K562 (cell line): ENCODE measurements at regions of chr3 and their contacts with region 1.

Region 1: DNA sequence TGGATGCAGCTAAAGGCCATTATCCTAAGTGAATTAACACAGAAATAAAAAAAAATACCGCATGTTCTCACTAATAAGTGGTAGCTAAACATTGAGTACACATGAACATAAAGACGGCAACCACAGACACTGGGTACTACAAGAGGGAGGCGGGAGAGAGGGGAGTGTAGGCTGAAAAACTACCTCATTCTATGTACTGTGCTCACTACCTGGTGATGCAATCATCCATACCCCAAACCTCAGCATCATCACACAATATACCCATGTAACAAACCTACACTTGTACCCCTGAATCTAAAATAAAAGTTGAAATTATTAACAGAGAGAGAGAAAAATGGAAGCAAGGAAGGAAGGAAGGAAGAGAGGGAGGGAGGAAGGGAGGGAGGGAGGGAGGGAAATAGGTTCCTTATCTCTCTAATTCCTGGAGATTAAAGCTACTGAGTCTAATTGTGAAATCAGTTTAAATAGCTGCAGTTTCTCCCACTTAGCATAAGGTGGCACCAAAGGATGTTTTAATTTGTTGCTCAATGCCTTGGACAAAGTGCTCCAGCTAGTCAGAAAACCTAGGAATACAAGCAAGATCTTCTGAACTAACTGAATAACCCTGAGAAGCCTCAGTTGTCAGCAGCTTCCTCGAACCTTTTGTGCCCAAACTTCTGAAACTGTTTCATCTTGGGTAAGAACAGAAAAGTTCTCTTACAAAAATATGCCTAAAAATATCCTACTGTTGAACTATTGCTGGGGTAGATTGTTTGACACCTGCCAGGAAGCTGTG is 79.4 kb upstream of the ATP11B start:
- DNase-seq: peak in 2 of 4 experiments; percentile 62 to 81
- ATAC-seq: peak; percentile 68
- H3K4me3 ChIP-seq: no peak overlapping the region
- H3K27ac ChIP-seq: peak overlapping the region; percentile 47; the same call in 1 of the 3 replicates
- H3K4me1 ChIP-seq: peaks cover 3 to 35% of the 10 kb centered on the region in 2 experiments
- H3K27me3 ChIP-seq: no peaks in the 10 kb centered on the region
- CTCF ChIP-seq: peak; percentile 61 to 88 (median 63); a peak in 5 of 6 replicates
- EP300 ChIP-seq: 0 out of 2 replicates have a peak, but pooled peaks have one; percentile 1
- POLR2A ChIP-seq: no peak
- RAD21 ChIP-seq: peak; percentile 88 to 91

Region 2: DNA sequence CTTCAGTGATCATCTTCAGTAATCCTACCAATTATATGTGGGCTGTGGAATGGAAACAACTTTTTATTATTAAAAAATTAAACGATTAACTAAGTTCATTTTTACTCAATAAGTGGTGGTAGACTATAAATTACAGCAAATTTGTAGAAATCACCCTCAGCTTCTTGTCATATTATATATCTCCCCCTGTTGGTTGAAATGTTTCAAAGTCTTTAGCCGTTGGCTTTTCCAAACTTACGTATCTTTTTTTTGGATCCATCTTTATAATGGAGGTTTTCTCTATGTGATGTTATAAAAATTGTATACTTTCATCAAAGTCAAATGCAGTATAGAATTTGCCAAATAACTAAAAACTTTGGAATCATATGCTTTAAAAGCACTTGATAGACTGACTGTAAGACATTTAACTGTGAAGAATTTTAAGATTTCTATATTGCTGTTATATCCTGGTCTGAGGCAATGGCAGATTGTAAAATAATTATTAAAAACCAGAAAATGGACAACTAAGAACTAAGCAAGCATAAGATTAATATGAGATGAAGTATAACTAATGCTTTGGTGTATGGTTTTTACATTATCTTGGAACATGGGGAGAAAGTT is 124.0 kb after region 1 on chr3:
- CTCF ChIA-PET with region 1: interaction called, 20 read pairs
- POLR2A ChIA-PET with region 1: interaction called, 4 read pairs
- in situ Hi-C with region 1: loop called (anchors 5 kb)
- intact Hi-C with region 1: loop called (anchors 1 kb)
- DNase-seq: peak in 1 of 4 experiments; percentile 39
- ATAC-seq: peak; percentile 68
- H3K4me3 ChIP-seq: no peak overlapping the region
- H3K27ac ChIP-seq: no peak overlapping the region
- H3K4me1 ChIP-seq: no peaks in the 10 kb centered on the region
- H3K27me3 ChIP-seq: no peaks in the 10 kb centered on the region
- CTCF ChIP-seq: peak in 2 of 3 experiments; percentile 11 to 67; a peak in 3 of 6 replicates
- EP300 ChIP-seq: no peak
- POLR2A ChIP-seq: no peak
- RAD21 ChIP-seq: peak; percentile 63 to 80

Region 3: DNA sequence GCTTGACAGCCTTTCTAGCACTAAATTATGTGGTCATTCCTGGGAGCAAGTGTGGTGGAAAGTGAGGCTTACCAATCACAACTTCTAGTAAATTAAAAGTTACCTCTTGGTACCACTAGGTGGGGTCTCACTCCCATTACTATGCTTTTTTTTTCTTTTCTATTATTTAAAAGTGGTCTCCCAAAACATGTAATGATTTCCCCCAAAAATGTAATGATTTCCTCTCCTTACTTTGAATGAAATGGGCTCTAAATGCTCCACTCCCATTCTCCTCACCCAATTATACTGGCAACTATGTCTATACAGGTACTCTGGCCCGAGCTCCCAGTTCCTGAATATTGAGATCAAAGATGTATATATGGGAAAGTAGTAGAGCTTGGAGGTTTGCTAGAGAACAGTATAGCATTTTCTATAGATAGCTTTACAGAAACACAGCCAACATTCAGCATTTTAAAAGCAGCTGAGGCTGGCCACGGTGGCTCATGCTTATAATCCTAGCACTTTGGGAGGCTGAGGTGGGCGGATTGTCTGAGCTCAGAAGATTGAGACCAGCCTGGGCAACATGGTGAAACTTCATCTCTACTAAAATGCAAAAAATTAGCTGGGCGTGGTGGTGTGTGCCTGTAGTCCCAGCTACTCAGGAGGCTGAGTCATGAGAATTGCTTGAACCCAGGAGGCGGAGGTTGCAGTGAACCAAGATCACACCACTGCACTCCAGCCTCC is 195.5 kb after region 1 on chr3:
- CTCF ChIA-PET with region 1: no interaction called
- POLR2A ChIA-PET with region 1: no interaction called
- in situ Hi-C with region 1: no loop called
- intact Hi-C with region 1: loop called (anchors 5 kb)
- DNase-seq: peak; percentile 33 to 45 (median 36)
- ATAC-seq: peak; percentile 54
- H3K4me3 ChIP-seq: no peak overlapping the region
- H3K27ac ChIP-seq: no peak overlapping the region
- H3K4me1 ChIP-seq: peaks cover 7 to 23% of the 10 kb centered on the region in 2 experiments
- H3K27me3 ChIP-seq: no peaks in the 10 kb centered on the region
- CTCF ChIP-seq: peak; percentile 18 to 65 (median 55); a peak in 5 of 6 replicates
- EP300 ChIP-seq: no peak
- POLR2A ChIP-seq: no peak
- RAD21 ChIP-seq: peak; percentile 35 to 63

Region 4: GRCh38 chr3:183178629-183179549 is 465.0 kb after region 1 on chr3:
- CTCF ChIA-PET with region 1: interaction called, 4 read pairs
- POLR2A ChIA-PET with region 1: no interaction called
- in situ Hi-C with region 1: no loop called
- intact Hi-C with region 1: loop called (anchors 1 kb)
- DNase-seq: peak; percentile 65 to 69 (median 68)
- ATAC-seq: peak; percentile 92
- H3K4me3 ChIP-seq: peak overlapping the region; percentile 50
- H3K27ac ChIP-seq: no peak overlapping the region
- H3K4me1 ChIP-seq: peaks cover 0 to 25% of the 10 kb centered on the region in 2 experiments; a peak in 2 of 5 replicates
- H3K27me3 ChIP-seq: peaks cover 0 to 29% of the 10 kb centered on the region in 2 experiments; a peak in 3 of 5 replicates
- CTCF ChIP-seq: peak; percentile 55 to 90 (median 62); a peak in 5 of 6 replicates
- EP300 ChIP-seq: no peak
- POLR2A ChIP-seq: no peak
- RAD21 ChIP-seq: peak; percentile 47 to 58

Region 5: DNA sequence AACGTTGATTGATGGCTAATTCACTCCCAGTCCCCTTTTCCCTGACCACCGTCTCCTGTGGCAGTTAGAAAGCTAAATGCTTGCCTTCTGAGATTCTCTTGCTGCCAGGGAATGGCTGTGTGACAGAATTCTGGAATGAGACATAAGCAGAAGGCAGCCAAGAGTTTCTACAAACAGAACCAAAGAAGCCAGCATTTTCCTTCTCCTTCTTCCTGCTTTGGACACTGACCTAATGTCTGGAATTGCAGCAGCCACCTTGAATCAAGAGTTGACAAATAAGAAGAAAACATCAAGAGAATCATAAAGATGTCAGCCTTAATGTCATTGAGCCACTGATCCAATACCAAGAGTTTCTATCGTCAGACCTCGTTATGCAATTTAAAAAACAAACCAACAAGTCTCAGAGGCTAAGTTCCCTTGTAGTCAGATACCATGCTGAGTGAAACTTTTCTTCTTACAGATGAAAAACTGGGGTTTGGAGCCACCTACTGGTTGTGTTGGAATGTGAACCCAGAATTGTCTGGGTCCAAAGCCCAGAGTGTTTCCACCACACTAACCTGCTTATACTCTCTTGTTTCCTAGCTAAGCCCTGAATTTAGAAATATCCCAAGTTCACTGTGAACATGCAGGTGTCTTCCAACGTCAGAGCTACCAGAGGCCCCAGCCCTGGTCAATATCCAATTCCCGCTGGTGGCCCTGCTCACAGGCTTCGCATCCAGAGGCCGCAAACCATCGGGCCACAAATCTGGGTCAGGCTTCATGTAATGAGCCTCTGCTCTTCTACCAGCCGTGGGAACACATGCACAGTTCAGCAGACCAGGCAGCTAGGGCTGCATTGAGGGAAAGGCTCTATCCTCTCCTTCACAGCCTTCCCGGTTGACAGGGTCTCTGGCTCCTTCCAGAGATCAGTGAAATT is 672.0 kb after region 1 on chr3:
- CTCF ChIA-PET with region 1: interaction called, 9 read pairs
- POLR2A ChIA-PET with region 1: no interaction called
- in situ Hi-C with region 1: no loop called
- intact Hi-C with region 1: loop called (anchors 2 kb)
- DNase-seq: peak; percentile 59 to 79 (median 60)
- ATAC-seq: peak; percentile 89
- H3K4me3 ChIP-seq: no peak overlapping the region
- H3K27ac ChIP-seq: no peak overlapping the region
- H3K4me1 ChIP-seq: peaks cover 0 to 3% of the 10 kb centered on the region in 2 experiments; a peak in 3 of 5 replicates
- H3K27me3 ChIP-seq: no peaks in the 10 kb centered on the region
- CTCF ChIP-seq: peak; percentile 75 to 85 (median 75)
- EP300 ChIP-seq: no peak
- POLR2A ChIP-seq: no peak
- RAD21 ChIP-seq: peak; percentile 88 to 92